ENCODE measurements at regions of chr17 and their contacts with region 1.

Region 1: GRCh38 chr17:64129764-64130558 is at the start of gene ERN1:
- DNase-seq: peak; percentile 73 to 97
- H3K4me3 ChIP-seq: peak within 1 kb of the TSS; percentile 94 to 96
- H3K27ac ChIP-seq: peak within 1 kb of the TSS; percentile 98 to 100
- H3K4me1 ChIP-seq: peaks cover 3 to 16% of the 10 kb centered on the region in 2 donors
- H3K27me3 ChIP-seq: no peaks in the 10 kb centered on the region
- CTCF ChIP-seq: peak in 2 of 3 experiments; percentile 10 to 13
- total RNA-seq, gene ERN1: 26.5 TPM

Region 2: GRCh38 chr17:63919311-63919723 is 210.6 kb before region 1 on chr17:
- intact Hi-C with region 1: loop called (anchors 2 kb)
- DNase-seq: peak in 1 of 2 donors; percentile 73
- H3K4me3 ChIP-seq: no peak overlapping the region
- H3K27ac ChIP-seq: no peak overlapping the region
- H3K4me1 ChIP-seq: no peaks in the 10 kb centered on the region
- H3K27me3 ChIP-seq: no peaks in the 10 kb centered on the region
- CTCF ChIP-seq: peak; percentile 87 to 95 (median 91)

Region 3: DNA sequence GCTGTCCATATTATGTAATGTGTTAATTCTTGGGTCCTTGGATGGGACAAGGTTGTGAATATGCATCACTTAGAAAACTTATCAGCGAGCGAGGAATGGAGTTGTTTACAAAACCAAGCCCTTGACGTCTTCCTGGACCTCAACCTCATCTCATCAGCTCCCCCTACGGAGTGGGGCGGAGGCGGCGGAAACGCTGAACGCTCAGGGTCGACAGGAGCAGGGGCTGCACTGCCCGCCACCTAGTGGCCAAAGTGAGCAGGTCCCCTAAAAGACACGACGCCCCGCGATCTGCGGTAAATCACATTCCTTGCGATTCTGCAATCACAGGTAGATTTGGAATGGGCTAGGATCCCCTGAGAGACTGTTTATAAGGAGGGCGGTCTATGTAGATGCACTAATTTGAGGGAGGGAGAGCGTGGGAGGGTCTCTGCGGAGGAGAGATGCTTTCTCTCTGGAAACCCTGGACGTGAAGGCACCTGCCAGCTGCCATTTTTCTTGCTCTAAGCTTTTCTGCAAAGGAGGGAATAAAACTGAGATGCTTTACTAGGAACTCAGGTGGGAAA is 104.1 kb before region 1 on chr17:
- intact Hi-C with region 1: loop called (anchors 1 kb)
- DNase-seq: peak; percentile 46 to 87
- H3K4me3 ChIP-seq: peak overlapping the region; percentile 29 to 33
- H3K27ac ChIP-seq: no peak overlapping the region
- H3K4me1 ChIP-seq: peaks cover 0 to 3% of the 10 kb centered on the region in 2 donors
- H3K27me3 ChIP-seq: no peaks in the 10 kb centered on the region
- CTCF ChIP-seq: peak; percentile 88 to 95 (median 91)

Region 4: DNA sequence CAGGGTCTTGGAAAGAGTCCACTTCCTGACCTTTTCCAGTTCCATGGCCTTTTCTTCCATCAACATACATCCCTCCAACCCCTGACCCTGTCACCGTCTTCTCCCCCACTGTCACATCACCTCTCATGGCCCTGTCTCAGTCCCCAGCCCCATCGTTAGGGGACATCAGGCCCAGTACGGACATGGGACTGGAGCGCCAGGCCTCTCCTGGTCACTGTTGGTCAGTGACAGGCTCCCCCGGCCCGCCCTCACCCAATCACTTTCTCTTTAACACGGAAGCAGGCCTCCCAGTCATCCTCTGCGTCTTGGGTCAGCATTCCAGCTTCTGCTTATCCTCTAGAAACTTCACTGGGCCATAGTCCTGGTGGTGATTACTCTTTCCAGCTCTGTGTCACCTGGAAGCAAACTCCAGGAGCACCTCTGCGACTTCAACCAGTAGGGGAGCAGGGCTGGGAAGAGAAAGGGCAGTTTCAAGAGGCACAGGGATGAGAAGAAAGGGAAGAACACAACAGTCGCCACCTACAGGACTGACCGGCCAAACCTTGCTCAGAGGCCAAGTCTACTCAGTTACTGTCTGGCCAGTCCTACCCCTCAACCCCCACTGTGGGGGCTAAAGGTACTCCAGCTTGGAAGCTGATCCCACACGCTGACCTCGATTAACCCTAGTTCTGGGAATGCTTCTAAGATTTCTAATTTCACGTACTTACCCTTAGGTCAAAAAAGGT is 93.6 kb before region 1 on chr17:
- intact Hi-C with region 1: no loop called
- DNase-seq: peak in 1 of 2 donors; percentile 59
- H3K4me3 ChIP-seq: no peak overlapping the region
- H3K27ac ChIP-seq: no peak overlapping the region
- H3K4me1 ChIP-seq: no peaks in the 10 kb centered on the region
- H3K27me3 ChIP-seq: no peaks in the 10 kb centered on the region
- CTCF ChIP-seq: no peak

Region 5: GRCh38 chr17:64063766-64064224 is 66.2 kb before region 1 on chr17:
- intact Hi-C with region 1: loop called (anchors 1 kb)
- DNase-seq: no peak
- H3K4me3 ChIP-seq: no peak overlapping the region
- H3K27ac ChIP-seq: no peak overlapping the region
- H3K4me1 ChIP-seq: no peaks in the 10 kb centered on the region
- H3K27me3 ChIP-seq: no peaks in the 10 kb centered on the region
- CTCF ChIP-seq: peak; percentile 30 to 53 (median 35)

Region 6: GRCh38 chr17:64081802-64082799 is 47.9 kb before region 1 on chr17:
- intact Hi-C with region 1: loop called (anchors 5 kb)
- DNase-seq: no peak
- H3K4me3 ChIP-seq: no peak overlapping the region
- H3K27ac ChIP-seq: no peak overlapping the region
- H3K4me1 ChIP-seq: peaks cover 0 to 4% of the 10 kb centered on the region in 2 donors
- H3K27me3 ChIP-seq: no peaks in the 10 kb centered on the region
- CTCF ChIP-seq: no peak

Region 7: GRCh38 chr17:64262417-64263260 is 132.7 kb after region 1 on chr17 and contains the start of gene TEX2:
- intact Hi-C with region 1: loop called (anchors 5 kb)
- DNase-seq: peak in 1 of 2 donors; percentile 79
- H3K4me3 ChIP-seq: peak within 1 kb of the TSS; percentile 92 to 98
- H3K27ac ChIP-seq: peak within 1 kb of the TSS; percentile 90 to 93
- H3K4me1 ChIP-seq: peaks cover 0 to 23% of the 10 kb centered on the region in 2 donors
- H3K27me3 ChIP-seq: no peaks in the 10 kb centered on the region
- CTCF ChIP-seq: no peak
- total RNA-seq, gene TEX2: 94.6 TPM

Measured in ascending aorta (tissue), 2 donors.